BJ (cell line): ENCODE measurements at regions of chr21 and their contacts with region 1.

Region 1: GRCh38 chr21:14926186-14926585 is 138.6 kb downstream of the NRIP1 start:
- DNase-seq: no peak
- H3K4me3 ChIP-seq: no peak overlapping the region
- H3K27me3 ChIP-seq: no peaks in the 10 kb centered on the region
- CTCF ChIP-seq: no peak

Region 2: GRCh38 chr21:14901482-14901958 is 24.7 kb before region 1 on chr21:
- CTCF ChIA-PET with region 1: no interaction called
- POLR2A ChIA-PET with region 1: interaction called, 10 read pairs
- DNase-seq: no peak
- H3K4me3 ChIP-seq: no peak overlapping the region
- H3K27me3 ChIP-seq: no peaks in the 10 kb centered on the region
- CTCF ChIP-seq: no peak

Region 3: DNA sequence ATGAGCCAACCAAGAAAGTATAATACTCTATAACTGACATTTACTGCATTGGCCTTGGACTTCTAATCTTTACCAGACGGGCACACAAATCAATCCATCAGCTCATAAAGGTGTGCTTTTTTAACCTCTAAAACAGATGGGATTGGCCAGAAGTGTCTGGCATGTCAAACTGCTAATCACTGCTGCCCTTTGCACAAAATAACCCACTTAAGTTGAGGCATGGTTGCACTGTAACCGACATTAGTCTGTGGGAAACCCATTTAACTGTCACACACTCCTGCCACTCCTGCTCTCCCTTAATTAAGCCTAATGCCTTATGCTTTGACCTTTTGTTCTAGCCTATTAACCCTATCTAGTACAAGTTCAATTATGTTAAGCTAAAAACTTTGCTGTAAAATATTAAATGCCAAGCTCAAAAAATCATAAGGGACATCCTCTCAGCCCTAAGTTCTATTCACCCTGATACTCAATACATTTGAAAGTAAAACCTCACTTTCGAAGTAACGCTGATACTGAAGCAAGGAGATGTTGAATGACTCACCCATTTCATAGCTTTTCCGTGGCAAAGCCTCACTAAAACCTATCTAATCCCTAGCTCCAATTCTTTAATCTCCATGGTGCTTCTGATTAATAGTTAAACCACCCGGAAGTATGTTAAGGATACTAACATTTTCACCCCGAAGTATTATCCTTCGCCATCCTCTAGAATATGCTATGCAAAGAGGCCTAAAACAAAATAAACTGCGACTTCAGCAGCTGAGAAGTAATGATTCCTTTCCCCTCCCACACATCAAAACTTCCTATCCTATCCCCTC is 125.7 kb after region 1 on chr21:
- CTCF ChIA-PET with region 1: no interaction called
- POLR2A ChIA-PET with region 1: no interaction called
- DNase-seq: no peak
- H3K4me3 ChIP-seq: no peak overlapping the region
- H3K27me3 ChIP-seq: no peaks in the 10 kb centered on the region
- CTCF ChIP-seq: no peak